Heart right ventricle (tissue), 16 donors: ENCODE measurements at regions of chr10 and their contacts with region 1.

Region 1: DNA sequence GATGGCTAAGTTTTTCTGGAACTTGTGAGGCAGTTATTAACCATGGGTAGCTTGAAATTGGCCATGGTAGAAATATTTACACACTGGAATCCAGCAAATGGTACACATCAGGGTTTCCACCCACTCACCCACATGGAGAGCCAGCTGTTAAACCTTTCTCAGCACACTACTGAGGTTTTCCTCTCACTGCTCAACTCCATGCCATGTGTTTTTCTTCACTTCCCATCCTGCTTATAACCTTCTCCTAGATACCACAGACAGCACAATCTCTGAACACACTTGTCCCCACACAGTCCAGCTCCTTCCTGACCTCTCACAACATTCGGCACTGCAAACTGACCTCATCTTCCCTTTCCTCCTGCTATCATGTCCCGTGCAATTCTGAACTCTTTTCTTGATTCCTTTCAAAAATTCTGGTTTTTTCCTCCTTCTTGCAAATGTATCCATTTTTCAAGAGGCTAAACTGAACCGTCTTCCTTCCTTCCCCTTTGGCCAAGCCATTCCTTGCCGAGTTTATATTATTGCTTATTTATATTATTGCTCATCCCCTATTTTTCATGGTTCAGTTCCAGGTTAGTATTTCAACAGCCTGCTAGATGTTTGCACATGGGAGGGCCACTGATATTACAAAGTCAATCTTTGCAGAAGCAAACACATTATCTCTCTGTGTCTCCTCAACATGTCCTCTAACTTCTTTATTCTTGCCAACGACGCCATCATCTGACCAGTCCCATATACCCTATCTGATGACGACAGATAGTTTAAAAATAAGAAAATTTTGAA is 606.4 kb downstream of the SORCS1 start:
- DNase-seq: no peak
- ATAC-seq: peak; percentile 34 to 83 (median 64)
- H3K4me3 ChIP-seq: no peak overlapping the region
- H3K27ac ChIP-seq: no peak overlapping the region
- H3K4me1 ChIP-seq: peaks cover 0 to 9% (median 0%) of the 10 kb centered on the region in 9 donors
- H3K27me3 ChIP-seq: no peaks in the 10 kb centered on the region
- CTCF ChIP-seq: no peak

Region 2: GRCh38 chr10:106537866-106538265 is 20.3 kb before region 1 on chr10:
- intact Hi-C with region 1: loop called in 1 of 10 experiments (anchors 2 kb)
- DNase-seq: no peak
- ATAC-seq: no peak
- H3K4me3 ChIP-seq: no peak overlapping the region
- H3K27ac ChIP-seq: no peak overlapping the region
- H3K4me1 ChIP-seq: no peaks in the 10 kb centered on the region
- H3K27me3 ChIP-seq: no peaks in the 10 kb centered on the region
- CTCF ChIP-seq: no peak